Right ventricle myocardium inferior (tissue), 1 donor: ENCODE measurements at regions of chr2 and their contacts with region 1.

Region 1: DNA sequence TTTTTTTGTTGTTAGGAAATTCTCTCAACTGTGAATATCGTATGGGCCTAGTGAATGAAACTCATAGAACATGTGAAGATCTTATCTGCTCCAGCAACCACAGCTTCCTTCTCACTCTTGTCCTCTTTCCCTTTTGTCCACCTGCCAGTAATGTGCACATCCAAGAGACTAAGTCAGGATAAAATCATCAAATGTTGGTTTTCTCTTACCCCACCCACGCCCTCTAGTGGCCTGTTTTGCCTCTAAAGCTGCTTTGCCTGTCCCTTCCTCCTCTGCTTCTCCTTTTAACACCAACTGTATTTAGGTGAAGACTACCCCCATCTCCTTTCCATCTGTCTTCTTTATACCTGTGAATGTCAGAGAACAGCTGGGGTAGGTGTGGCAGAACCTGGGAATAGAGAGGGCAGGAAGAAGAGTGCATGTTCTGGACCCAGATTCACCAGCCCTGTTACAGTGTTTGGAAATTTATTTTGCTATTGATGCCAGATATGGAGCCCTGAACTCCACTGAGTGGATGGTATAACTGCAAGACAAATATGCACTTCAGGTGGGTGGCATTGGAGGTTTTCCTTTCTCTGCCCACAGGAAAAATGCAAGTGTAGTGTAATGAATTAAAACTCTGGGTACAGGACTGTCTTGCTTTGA is 8.4 kb upstream of the MGAT5 start:
- DNase-seq: peak; percentile 79
- ATAC-seq: peak; percentile 43

Region 2: GRCh38 chr2:134411828-134412638 is 166.6 kb after region 1 on chr2:
- intact Hi-C with region 1: loop called (anchors 5 kb)
- DNase-seq: no peak
- ATAC-seq: peak; percentile 96